Endothelial cell of umbilical vein (primary cell): ENCODE measurements at regions of chr5 and their contacts with region 1.

Region 1: DNA sequence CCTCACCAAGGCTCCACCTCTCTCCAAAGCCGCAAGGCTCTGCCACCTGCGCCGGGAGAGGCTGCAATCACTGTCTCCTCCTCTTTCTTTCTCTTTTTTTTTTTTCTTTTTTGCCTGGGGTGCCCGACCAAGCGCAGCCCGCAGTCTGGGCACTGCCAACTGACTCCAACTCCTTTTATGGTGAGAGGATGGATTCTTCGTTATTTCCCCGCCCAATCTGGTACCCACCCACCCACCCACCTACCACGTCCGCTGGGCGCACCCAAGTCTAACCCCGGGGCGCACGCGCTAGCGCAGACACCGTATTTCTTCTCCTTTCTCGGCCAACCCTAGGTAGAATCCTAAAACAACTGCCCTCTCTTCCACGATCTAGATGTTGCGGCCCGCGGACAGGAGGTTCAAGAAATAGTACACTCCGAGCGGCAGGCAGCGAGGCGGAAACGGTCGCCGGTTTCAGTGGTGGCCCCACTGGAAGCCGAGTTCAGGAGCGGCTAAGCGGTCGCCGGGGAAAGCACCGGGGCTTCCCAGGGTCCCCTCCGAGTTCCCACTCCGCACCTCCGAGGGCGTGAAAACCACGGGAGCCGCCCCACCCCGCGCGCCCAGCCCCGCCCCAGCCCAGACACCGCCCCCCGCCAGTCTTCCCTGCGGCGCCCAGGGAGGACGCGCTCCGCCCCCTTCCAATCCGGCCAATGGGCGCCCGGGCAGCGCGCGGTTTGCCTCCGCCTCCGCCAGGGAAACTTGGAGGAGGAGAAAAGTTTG is 381 bp upstream of the PTGER4 start:
- DNase-seq: peak; percentile 93
- H3K4me3 ChIP-seq: peak overlapping the region; percentile 71 to 98 (median 97)
- H3K27ac ChIP-seq: peak overlapping the region; percentile 76
- H3K4me1 ChIP-seq: peaks cover 30% of the 10 kb centered on the region
- H3K27me3 ChIP-seq: no peaks in the 10 kb centered on the region
- CTCF ChIP-seq: no peak
- POLR2A ChIP-seq: peak; percentile 96

Region 2: DNA sequence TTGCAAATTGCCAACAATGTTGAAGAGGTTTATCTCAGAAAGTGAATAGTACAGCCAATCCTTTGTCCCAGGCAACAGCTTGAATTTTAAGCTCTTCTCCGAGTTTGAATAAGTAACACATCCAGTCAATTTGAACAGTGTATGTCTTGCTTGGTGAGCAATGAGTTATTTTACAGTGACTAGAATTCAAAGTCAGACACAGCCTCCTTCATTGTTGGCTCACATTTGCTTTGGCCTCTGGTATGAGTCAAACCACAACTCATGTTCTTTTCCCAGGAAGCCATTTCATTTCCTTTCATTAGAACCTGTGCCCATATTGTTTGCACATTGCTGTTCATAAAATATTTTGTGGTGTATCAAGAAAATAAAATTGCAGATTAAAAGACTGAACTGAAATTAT is 632.5 kb before region 1 on chr5:
- CTCF ChIA-PET with region 1: no interaction called
- POLR2A ChIA-PET with region 1: no interaction called
- dilution Hi-C with region 1: no loop called
- intact Hi-C with region 1: loop called (anchors 2 kb)
- DNase-seq: peak; percentile 89
- H3K4me3 ChIP-seq: no peak overlapping the region
- H3K27ac ChIP-seq: peak overlapping the region; percentile 57
- H3K4me1 ChIP-seq: peaks cover 34% of the 10 kb centered on the region
- H3K27me3 ChIP-seq: no peaks in the 10 kb centered on the region
- CTCF ChIP-seq: no peak
- POLR2A ChIP-seq: no peak

Region 3: DNA sequence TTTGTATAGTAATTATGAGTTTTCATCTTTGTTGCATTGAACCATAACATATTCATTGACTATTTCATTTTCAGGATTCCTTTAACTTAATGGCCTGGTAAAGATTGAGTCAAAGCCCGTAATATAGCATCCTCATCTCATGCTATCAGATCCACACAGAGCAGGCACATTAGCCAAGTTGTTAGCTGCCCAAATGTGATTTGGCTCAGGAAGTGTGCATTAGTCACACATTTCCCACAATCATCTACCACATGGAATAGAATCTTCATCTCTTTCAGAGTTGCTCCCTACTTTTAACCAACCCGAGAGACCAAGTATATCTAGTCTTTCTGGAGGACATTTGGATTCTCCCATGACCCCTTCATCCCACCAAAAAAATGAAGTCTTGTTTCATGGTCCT is 480.6 kb before region 1 on chr5:
- CTCF ChIA-PET with region 1: interaction called, 7 read pairs
- POLR2A ChIA-PET with region 1: interaction called, 4 read pairs
- dilution Hi-C with region 1: no loop called
- intact Hi-C with region 1: loop called (anchors 1 kb)
- DNase-seq: peak; percentile 87
- H3K4me3 ChIP-seq: no peak overlapping the region
- H3K27ac ChIP-seq: peak overlapping the region; percentile 33
- H3K4me1 ChIP-seq: peaks cover 33% of the 10 kb centered on the region
- H3K27me3 ChIP-seq: no peaks in the 10 kb centered on the region
- CTCF ChIP-seq: no peak
- POLR2A ChIP-seq: no peak

Region 4: GRCh38 chr5:40410231-40410861 is 269.0 kb before region 1 on chr5:
- CTCF ChIA-PET with region 1: interaction called, 4 read pairs
- POLR2A ChIA-PET with region 1: interaction called, 3 read pairs
- dilution Hi-C with region 1: no loop called
- intact Hi-C with region 1: loop called (anchors 1 kb)
- DNase-seq: peak; percentile 97
- H3K4me3 ChIP-seq: peak overlapping the region in 1 of 3 experiments; percentile 24
- H3K27ac ChIP-seq: peak overlapping the region; percentile 81
- H3K4me1 ChIP-seq: peaks cover 24% of the 10 kb centered on the region
- H3K27me3 ChIP-seq: no peaks in the 10 kb centered on the region
- CTCF ChIP-seq: no peak
- POLR2A ChIP-seq: peak; percentile 13

Region 5: GRCh38 chr5:40521925-40522324 is 157.4 kb before region 1 on chr5:
- CTCF ChIA-PET with region 1: interaction called, 3 read pairs
- POLR2A ChIA-PET with region 1: interaction called, 5 read pairs
- dilution Hi-C with region 1: no loop called
- intact Hi-C with region 1: loop called (anchors 1 kb)
- DNase-seq: no peak
- H3K4me3 ChIP-seq: peak overlapping the region in 2 of 3 experiments; percentile 17 to 23
- H3K27ac ChIP-seq: no peak overlapping the region
- H3K4me1 ChIP-seq: peaks cover 9% of the 10 kb centered on the region
- H3K27me3 ChIP-seq: peaks cover 2 to 27% of the 10 kb centered on the region in 2 experiments
- CTCF ChIP-seq: no peak
- POLR2A ChIP-seq: no peak

Region 6: DNA sequence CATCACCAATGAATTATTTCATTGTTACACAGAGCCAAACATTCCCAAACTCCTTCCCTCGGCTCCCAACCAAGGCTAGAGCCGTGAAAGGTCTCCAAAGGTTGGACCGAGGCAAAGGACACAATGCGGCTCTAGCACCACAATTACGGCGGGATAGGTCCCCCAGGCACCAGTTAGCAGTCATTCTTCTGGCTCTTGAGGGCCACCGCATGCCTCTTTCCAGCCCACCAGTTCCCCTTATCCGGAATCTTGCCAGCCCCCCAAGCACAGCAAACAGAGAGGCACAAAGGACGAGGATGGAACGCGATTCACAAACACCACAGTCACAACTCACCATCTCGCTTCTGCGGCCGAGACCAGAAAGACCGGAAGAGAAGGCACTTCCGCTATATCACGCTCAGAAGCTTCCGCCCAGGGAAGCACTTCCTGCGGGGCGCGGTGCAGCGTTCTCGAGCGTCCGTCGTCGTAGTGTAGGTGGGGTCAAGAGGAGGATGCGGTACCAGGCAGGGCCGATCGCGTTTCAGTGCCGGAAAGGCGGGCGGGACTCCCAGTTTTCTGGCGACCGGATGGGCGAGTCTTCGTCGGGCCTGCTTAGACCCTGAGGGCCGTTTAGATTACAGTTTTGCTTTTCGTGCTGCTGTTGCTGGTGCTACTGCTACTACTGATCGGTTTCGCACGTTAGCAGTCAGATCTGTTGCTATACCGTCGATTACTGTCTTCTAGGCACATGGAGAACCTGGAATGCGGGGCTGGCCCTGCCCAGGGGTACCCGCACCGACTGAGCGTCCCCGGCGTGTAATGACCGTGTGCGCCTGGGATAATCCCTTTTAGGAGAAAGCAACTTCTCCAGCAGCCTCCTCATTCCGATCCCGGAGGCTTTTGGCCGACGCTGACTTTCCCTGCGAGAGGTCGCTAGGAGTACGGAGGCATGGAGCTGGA is 155.8 kb after region 1 on chr5 and contains the start of gene RPL37:
- CTCF ChIA-PET with region 1: no interaction called
- POLR2A ChIA-PET with region 1: interaction called, 3 read pairs
- dilution Hi-C with region 1: no loop called
- intact Hi-C with region 1: loop called (anchors 1 kb)
- DNase-seq: peak; percentile 94
- H3K4me3 ChIP-seq: peak within 1 kb of the TSS; percentile 44 to 90 (median 66)
- H3K27ac ChIP-seq: peak within 1 kb of the TSS; percentile 71
- H3K4me1 ChIP-seq: peaks cover 28% of the 10 kb centered on the region
- H3K27me3 ChIP-seq: no peaks in the 10 kb centered on the region
- CTCF ChIP-seq: no peak
- POLR2A ChIP-seq: peak; percentile 99
- total RNA-seq, gene RPL37: 1,348 and 1,380 TPM in 2 replicates